Naive thymus-derived CD4-positive, alpha-beta T cell (primary cell): ENCODE measurements at regions of chr6 and their contacts with region 1.

Region 1: GRCh38 chr6:41002216-41002615 is 36.8 kb downstream of the UNC5CL start:
- DNase-seq: no peak
- ATAC-seq: no peak
- H3K4me3 ChIP-seq: no peak overlapping the region
- H3K4me3 Mint-ChIP-seq: no peak overlapping the region
- H3K27ac ChIP-seq: no peak overlapping the region
- H3K27ac Mint-ChIP-seq: no peak overlapping the region
- H3K4me1 ChIP-seq: no peaks in the 10 kb centered on the region
- H3K4me1 Mint-ChIP-seq: peaks cover 0 to 6% (median 4%) of the 10 kb centered on the region in 7 donors
- H3K27me3 ChIP-seq: no peaks in the 10 kb centered on the region
- H3K27me3 Mint-ChIP-seq: peaks cover 26 to 56% (median 28%) of the 10 kb centered on the region in 5 donors

Region 2: DNA sequence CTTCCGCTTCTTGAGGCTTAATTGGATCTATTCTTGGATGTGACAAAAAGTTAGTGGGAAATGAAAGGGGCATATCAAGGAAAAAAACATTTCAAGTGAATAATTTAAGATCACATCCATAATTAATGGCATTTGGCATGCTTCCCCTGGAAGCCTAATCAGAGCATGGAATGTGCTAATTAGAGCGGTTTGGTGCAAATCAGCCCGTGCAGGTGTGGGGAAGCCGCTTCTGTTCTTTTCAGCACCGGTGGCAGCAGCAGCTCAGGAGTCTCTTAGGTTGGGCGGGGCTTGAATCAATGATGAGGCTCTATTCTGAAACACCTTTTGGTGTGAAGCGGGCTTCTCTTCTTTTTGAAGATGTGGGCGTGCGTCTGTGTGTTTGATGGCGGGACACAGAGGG is 716.2 kb before region 1 on chr6:
- CTCF ChIA-PET with region 1: no interaction called
- POLR2A ChIA-PET with region 1: no interaction called
- intact Hi-C with region 1: no loop called
- DNase-seq: no peak
- ATAC-seq: no peak
- H3K4me3 ChIP-seq: no peak overlapping the region
- H3K4me3 Mint-ChIP-seq: no peak overlapping the region
- H3K27ac ChIP-seq: no peak overlapping the region
- H3K27ac Mint-ChIP-seq: no peak overlapping the region
- H3K4me1 ChIP-seq: no peaks in the 10 kb centered on the region
- H3K4me1 Mint-ChIP-seq: peaks cover 0 to 7% (median 0%) of the 10 kb centered on the region in 7 donors
- H3K27me3 ChIP-seq: peaks cover 0 to 2% of the 10 kb centered on the region in 2 donors
- H3K27me3 Mint-ChIP-seq: peaks cover 35 to 57% (median 41%) of the 10 kb centered on the region in 5 donors

Region 3: GRCh38 chr6:41039060-41039998 is 37.1 kb after region 1 on chr6 and contains the start of gene UNC5CL:
- CTCF ChIA-PET with region 1: interaction called, 4 read pairs
- POLR2A ChIA-PET with region 1: no interaction called
- intact Hi-C with region 1: loop called (anchors 1 kb)
- DNase-seq: peak; percentile 11 to 57 (median 50)
- ATAC-seq: peak; percentile 77
- H3K4me3 ChIP-seq: no peak within 1 kb of the TSS
- H3K4me3 Mint-ChIP-seq: no peak within 1 kb of the TSS
- H3K27ac ChIP-seq: no peak within 1 kb of the TSS
- H3K27ac Mint-ChIP-seq: peak within 1 kb of the TSS in 2 of 9 donors; percentile 2 to 36
- H3K4me1 ChIP-seq: no peaks in the 10 kb centered on the region
- H3K4me1 Mint-ChIP-seq: peaks cover 0 to 20% (median 0%) of the 10 kb centered on the region in 7 donors
- H3K27me3 ChIP-seq: no peaks in the 10 kb centered on the region
- H3K27me3 Mint-ChIP-seq: no peaks in the 10 kb centered on the region
- total RNA-seq, gene UNC5CL: 2.2 to 7.2 (median 4.3) TPM

Region 4: GRCh38 chr6:41066867-41067304 is 64.7 kb after region 1 on chr6:
- CTCF ChIA-PET with region 1: interaction called, 8 read pairs
- POLR2A ChIA-PET with region 1: no interaction called
- intact Hi-C with region 1: loop called (anchors 1 kb)
- DNase-seq: peak; percentile 26 to 62 (median 51)
- ATAC-seq: no peak
- H3K4me3 ChIP-seq: no peak overlapping the region
- H3K4me3 Mint-ChIP-seq: no peak overlapping the region
- H3K27ac ChIP-seq: no peak overlapping the region
- H3K27ac Mint-ChIP-seq: peak overlapping the region in 6 of 9 donors; percentile 1 to 79 (median 28)
- H3K4me1 ChIP-seq: peaks cover 5 to 9% of the 10 kb centered on the region in 2 donors
- H3K4me1 Mint-ChIP-seq: peaks cover 21 to 46% (median 38%) of the 10 kb centered on the region in 7 donors
- H3K27me3 ChIP-seq: no peaks in the 10 kb centered on the region
- H3K27me3 Mint-ChIP-seq: no peaks in the 10 kb centered on the region

Region 5: GRCh38 chr6:41182069-41183034 is 180.1 kb after region 1 on chr6:
- CTCF ChIA-PET with region 1: no interaction called
- POLR2A ChIA-PET with region 1: no interaction called
- intact Hi-C with region 1: loop called in 1 of 2 experiments (anchors 1 kb)
- DNase-seq: peak in 8 of 9 donors; percentile 34 to 68 (median 60)
- ATAC-seq: peak; percentile 85
- H3K4me3 ChIP-seq: no peak overlapping the region
- H3K4me3 Mint-ChIP-seq: no peak overlapping the region
- H3K27ac ChIP-seq: no peak overlapping the region
- H3K27ac Mint-ChIP-seq: peak overlapping the region in 5 of 9 donors; percentile 0 to 68 (median 5)
- H3K4me1 ChIP-seq: peaks cover 0 to 17% of the 10 kb centered on the region in 2 donors
- H3K4me1 Mint-ChIP-seq: peaks cover 20 to 43% (median 34%) of the 10 kb centered on the region in 7 donors
- H3K27me3 ChIP-seq: no peaks in the 10 kb centered on the region
- H3K27me3 Mint-ChIP-seq: peaks cover 0 to 10% (median 3%) of the 10 kb centered on the region in 5 donors